ACHN (cell line): ENCODE measurements at regions of chr1 and their contacts with region 1.

Region 1: GRCh38 chr1:163071405-163072255 is 2.5 kb downstream of the RGS4 start:
- DNase-seq: peak; percentile 90

Region 2: DNA sequence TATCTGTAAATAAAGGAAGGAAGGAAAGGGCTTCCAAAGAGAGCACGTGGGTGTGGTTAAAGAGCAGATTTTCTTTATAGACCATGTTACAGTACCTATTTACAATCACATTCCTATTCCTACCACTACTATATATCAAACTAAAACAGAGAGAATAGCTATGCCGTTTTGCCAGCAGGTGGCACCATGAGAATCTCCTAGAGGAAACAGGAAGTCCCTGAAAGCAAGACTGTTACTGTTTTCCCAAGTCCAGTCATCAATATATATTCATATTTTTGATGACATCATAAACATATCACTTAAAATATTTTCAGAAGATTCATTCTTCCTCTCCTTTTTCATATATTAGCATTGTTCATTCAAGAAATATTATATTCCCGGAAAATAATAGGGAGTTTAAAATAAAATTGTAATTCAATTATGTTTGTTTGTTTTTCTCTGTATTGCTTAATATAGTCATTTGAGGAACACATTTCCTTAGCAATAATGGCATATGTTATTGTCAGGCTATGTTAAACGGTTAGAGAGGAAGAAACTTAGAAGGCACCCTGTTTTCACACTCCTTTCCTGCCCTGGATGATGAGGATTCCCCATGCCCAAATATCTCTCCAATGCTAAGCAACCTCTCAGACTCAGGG is 217.3 kb before region 1 on chr1:
- in situ Hi-C with region 1: loop called (anchors 25 kb)
- DNase-seq: peak; percentile 83

Region 3: GRCh38 chr1:163315773-163316374 is 244.2 kb after region 1 on chr1:
- in situ Hi-C with region 1: loop called (anchors 10 kb)
- DNase-seq: peak; percentile 59